ENCODE measurements at regions of chr15 and their contacts with region 1.

Region 1: DNA sequence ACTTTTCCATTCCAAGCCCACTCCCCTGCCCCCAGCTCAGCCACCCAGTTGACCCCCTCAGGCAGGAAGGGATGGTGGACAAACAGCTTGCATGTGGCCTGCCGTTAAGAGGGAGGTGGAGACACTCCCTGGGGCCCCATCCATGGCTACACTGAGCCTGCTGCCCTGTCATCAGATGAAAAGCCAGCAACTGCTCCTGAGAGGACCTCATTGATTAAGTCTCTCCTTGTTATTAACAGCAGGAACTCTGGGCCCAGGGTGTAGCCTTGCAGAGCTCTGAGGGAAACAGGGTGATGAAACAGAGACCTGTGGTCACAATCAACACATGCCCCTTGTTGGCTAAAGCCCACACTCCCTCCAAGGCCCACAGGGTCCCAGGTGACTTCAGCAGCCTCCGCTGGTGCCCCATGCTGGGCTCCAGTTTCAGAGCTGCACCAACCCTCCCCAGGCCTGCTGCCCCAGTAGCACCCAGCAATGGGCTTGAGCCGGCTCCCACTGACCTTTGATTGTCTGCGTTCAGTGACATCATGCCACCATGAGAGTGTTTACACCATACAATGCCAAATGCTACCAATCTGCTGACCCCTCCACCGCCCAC is 22.3 kb upstream of the TLE3 start:
- DNase-seq: no peak

Region 2: GRCh38 chr15:69931156-69931555 is 188.9 kb before region 1 on chr15:
- intact Hi-C with region 1: loop called in 1 of 2 experiments (anchors 5 kb)
- DNase-seq: no peak